ENCODE measurements at regions of chr2 and their contacts with region 1.

Region 1: GRCh38 chr2:233990261-233990798 is 60.2 kb upstream of the SPP2 start:
- DNase-seq: peak; percentile 58
- H3K4me3 Mint-ChIP-seq: no peak overlapping the region
- H3K27ac Mint-ChIP-seq: no peak overlapping the region
- H3K4me1 Mint-ChIP-seq: peaks cover 34% of the 10 kb centered on the region
- H3K27me3 Mint-ChIP-seq: peaks cover 19% of the 10 kb centered on the region

Region 2: GRCh38 chr2:233928594-233929351 is 61.6 kb before region 1 on chr2:
- intact Hi-C with region 1: no loop called
- DNase-seq: no peak
- H3K4me3 Mint-ChIP-seq: no peak overlapping the region
- H3K27ac Mint-ChIP-seq: no peak overlapping the region
- H3K4me1 Mint-ChIP-seq: peaks cover 1% of the 10 kb centered on the region
- H3K27me3 Mint-ChIP-seq: peaks cover 32% of the 10 kb centered on the region

Region 3: GRCh38 chr2:234032279-234032856 is 42.0 kb after region 1 on chr2:
- intact Hi-C with region 1: loop called (anchors 2 kb)
- DNase-seq: peak; percentile 28
- H3K4me3 Mint-ChIP-seq: no peak overlapping the region
- H3K27ac Mint-ChIP-seq: peak overlapping the region; percentile 6
- H3K4me1 Mint-ChIP-seq: peaks cover 16% of the 10 kb centered on the region
- H3K27me3 Mint-ChIP-seq: peaks cover 33% of the 10 kb centered on the region

Region 4: DNA sequence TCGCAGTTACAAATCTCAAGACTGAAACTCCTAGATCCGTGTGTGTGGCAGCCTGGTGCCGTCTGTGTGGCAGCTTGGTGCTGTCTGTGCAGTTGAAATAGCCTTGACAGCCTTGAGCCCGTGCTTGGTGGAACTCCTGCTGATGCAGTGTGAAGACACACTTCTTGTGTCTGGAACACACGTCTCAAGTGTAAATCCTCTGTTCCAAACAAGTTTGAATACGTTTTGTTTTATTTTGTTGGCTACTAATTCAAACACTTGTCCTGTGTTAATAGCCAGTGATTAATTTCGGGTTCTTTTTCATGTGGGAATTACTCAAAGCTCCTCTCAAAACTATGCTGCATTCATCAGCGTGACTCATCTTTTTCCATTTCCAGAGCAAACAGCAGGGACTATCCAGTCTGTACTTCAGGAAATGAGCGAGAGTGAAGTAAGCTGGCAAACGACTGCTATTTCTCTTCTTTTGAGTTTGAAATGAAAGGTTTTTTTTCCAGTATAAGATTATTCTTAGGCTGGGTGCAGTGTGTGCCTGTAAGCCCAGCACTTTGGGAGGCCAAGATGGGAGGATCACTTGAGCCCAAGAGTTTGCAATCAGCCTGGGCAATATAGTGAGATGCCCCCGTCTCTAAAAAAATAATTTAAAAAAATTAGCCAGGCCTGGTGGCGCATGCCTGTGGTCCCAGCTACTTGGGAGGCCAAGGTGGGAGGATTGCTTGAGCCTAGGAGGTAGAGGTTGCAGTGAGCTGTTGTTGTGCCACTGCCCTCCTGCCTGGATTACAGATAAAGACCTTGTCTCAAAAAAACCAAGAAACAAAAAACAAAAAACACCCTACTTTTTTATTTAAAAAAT is 213.0 kb after region 1 on chr2:
- intact Hi-C with region 1: no loop called
- DNase-seq: no peak
- H3K4me3 Mint-ChIP-seq: no peak overlapping the region
- H3K27ac Mint-ChIP-seq: no peak overlapping the region
- H3K4me1 Mint-ChIP-seq: no peaks in the 10 kb centered on the region
- H3K27me3 Mint-ChIP-seq: peaks cover 1% of the 10 kb centered on the region